Activated T-helper 1 cell treated with anti-CD3 and anti-CD28 coated beads, Interleukin-12 subunit alpha, Interleukin-12 subunit beta, Interleukin-2, Interleukin-4 antibody, amounts not matched to agents 30 ng/mL and 10 ng/mL and 1 ng/mL, durations not matched to agents 14 hours and 24 hours and 36 hours (primary cell): ENCODE measurements at regions of chr21 and their contacts with region 1.

Region 1: GRCh38 chr21:43789276-43790009 is at the start of gene RRP1:
- DNase-seq: peak; percentile 94
- H3K4me3 Mint-ChIP-seq: peak within 1 kb of the TSS; percentile 95
- H3K27ac Mint-ChIP-seq: peak within 1 kb of the TSS; percentile 94
- H3K4me1 Mint-ChIP-seq: peaks cover 23% of the 10 kb centered on the region
- H3K27me3 Mint-ChIP-seq: no peaks in the 10 kb centered on the region
- total RNA-seq, gene RRP1: 90.9 and 91.8 TPM in 2 replicates

Region 2: GRCh38 chr21:43708745-43709381 is 80.6 kb before region 1 on chr21:
- intact Hi-C with region 1: no loop called
- DNase-seq: no peak
- H3K4me3 Mint-ChIP-seq: no peak overlapping the region
- H3K27ac Mint-ChIP-seq: no peak overlapping the region
- H3K4me1 Mint-ChIP-seq: no peaks in the 10 kb centered on the region
- H3K27me3 Mint-ChIP-seq: peaks cover 17% of the 10 kb centered on the region

Region 3: GRCh38 chr21:43718872-43719747 is 70.3 kb before region 1 on chr21 and contains the start of gene PDXK:
- intact Hi-C with region 1: loop called (anchors 1 kb)
- DNase-seq: peak; percentile 82
- H3K4me3 Mint-ChIP-seq: peak within 1 kb of the TSS; percentile 86
- H3K27ac Mint-ChIP-seq: peak within 1 kb of the TSS; percentile 79
- H3K4me1 Mint-ChIP-seq: peaks cover 17% of the 10 kb centered on the region
- H3K27me3 Mint-ChIP-seq: peaks cover 25% of the 10 kb centered on the region
- total RNA-seq, gene PDXK: 123 and 135 TPM in 2 replicates

Region 4: DNA sequence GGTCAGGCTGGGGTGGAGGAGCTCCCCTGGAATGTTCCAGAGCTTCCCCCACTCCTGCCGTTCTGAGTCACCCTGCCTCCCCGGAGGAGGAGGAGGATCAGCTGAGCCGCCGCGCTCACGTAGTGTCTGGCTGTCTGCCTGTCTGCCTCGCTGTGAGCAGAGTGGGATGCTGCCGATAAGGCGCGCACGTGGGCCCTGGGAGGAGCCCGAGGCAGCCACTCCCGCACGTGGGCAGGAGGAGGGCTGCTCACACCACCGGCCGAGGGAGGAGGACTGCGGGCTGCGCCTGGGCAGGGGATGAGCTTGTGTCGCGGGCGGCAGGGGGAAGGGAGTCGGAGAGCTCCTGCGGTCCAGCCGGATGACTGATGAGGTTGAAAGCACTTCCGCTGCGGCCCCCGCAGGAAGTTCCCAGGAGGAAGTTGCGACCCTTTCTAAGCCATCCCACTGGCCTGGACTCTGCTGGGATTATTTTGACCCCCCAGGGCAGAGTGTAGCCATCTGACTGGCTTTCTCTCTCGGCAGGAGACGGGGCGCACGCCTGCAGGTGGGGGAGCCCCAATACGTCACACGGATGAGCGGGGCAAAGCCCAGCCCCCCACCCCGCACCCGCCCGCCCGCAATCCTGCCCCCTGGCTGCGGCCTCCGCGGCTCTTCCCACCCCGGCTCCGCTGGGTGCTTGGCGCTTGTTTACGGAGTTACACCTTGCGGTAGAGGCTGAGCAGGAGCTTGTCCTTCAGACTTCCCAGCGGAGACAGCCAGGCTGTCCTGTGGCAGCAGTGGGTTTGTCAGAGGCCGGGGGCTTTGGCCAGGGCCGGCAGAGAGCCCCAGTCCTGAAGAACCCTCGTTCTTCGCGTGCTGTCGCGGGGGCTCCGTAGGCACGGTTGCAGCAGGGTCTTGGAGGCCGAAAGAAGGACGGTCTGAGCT is 60.7 kb before region 1 on chr21:
- intact Hi-C with region 1: loop called (anchors 2 kb)
- DNase-seq: peak; percentile 72
- H3K4me3 Mint-ChIP-seq: peak overlapping the region; percentile 80
- H3K27ac Mint-ChIP-seq: peak overlapping the region; percentile 87
- H3K4me1 Mint-ChIP-seq: peaks cover 50% of the 10 kb centered on the region
- H3K27me3 Mint-ChIP-seq: no peaks in the 10 kb centered on the region

Region 5: GRCh38 chr21:43775795-43776430 is 13.5 kb before region 1 on chr21 and contains the start of gene CSTB:
- intact Hi-C with region 1: loop called (anchors 1 kb)
- DNase-seq: peak; percentile 83
- H3K4me3 Mint-ChIP-seq: peak within 1 kb of the TSS; percentile 96
- H3K27ac Mint-ChIP-seq: peak within 1 kb of the TSS; percentile 80
- H3K4me1 Mint-ChIP-seq: peaks cover 43% of the 10 kb centered on the region
- H3K27me3 Mint-ChIP-seq: no peaks in the 10 kb centered on the region
- total RNA-seq, gene CSTB: 51.9 and 52.4 TPM in 2 replicates

Region 6: GRCh38 chr21:43825681-43826622 is 36.5 kb after region 1 on chr21:
- intact Hi-C with region 1: no loop called
- DNase-seq: no peak
- H3K4me3 Mint-ChIP-seq: no peak overlapping the region
- H3K27ac Mint-ChIP-seq: no peak overlapping the region
- H3K4me1 Mint-ChIP-seq: no peaks in the 10 kb centered on the region
- H3K27me3 Mint-ChIP-seq: peaks cover 3% of the 10 kb centered on the region

Region 7: DNA sequence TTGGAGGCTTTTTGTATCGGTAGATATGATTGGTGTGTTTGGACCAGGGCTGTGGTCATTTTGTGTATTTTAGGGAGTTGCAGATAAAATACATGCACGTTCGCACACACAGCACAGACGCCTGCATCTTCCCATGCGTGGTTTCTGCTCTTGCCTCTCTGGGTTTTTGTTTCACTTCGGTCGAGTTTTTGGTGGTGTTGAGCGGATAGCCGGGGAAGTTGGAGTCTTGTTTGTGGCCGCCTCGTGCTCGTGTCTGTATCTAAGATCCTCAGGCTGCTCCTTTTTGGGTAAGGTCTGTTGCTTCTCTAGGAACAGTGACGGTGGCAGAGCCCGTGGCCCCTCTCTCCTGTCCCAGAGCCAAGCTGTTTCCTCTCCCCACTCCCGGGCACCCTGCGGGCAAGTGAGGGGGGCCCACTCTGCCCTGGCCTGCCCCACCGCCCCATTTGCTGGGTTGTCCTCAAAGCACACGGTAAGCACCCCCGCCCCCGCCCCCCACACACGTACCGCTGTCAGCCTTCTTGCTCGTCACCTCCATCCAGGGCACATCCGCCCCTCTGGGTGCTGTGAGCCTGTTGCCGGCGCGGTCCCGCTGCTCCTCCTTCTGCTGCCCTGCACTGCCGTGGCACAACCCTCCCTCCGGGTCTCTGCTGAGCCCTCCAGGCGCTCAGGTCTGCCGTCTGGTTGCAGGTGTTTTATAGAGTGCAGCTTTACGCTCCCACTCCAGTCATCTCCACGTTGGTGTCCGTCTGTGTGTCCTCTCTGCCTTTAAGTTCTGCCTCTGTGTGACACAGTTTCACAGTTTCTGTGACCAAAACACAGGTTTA is 127.5 kb after region 1 on chr21:
- intact Hi-C with region 1: loop called (anchors 5 kb)
- DNase-seq: peak; percentile 53
- H3K4me3 Mint-ChIP-seq: peak overlapping the region; percentile 81
- H3K27ac Mint-ChIP-seq: peak overlapping the region; percentile 81
- H3K4me1 Mint-ChIP-seq: peaks cover 66% of the 10 kb centered on the region
- H3K27me3 Mint-ChIP-seq: no peaks in the 10 kb centered on the region